ENCODE measurements at regions of chr5 and their contacts with region 1.

Region 1: GRCh38 chr5:43305948-43306565 is 7.2 kb downstream of the HMGCS1 start:
- DNase-seq: no peak
- H3K4me3 Mint-ChIP-seq: peak overlapping the region; percentile 99
- H3K27ac Mint-ChIP-seq: peak overlapping the region; percentile 60
- H3K4me1 Mint-ChIP-seq: peaks cover 58% of the 10 kb centered on the region
- H3K27me3 Mint-ChIP-seq: no peaks in the 10 kb centered on the region
- CTCF ChIP-seq: peak; percentile 44

Region 2: GRCh38 chr5:42994246-42995151 is 311.6 kb before region 1 on chr5:
- CTCF ChIA-PET with region 1: no interaction called
- intact Hi-C with region 1: loop called (anchors 10 kb)
- DNase-seq: peak; percentile 70
- H3K4me3 Mint-ChIP-seq: peak overlapping the region; percentile 95
- H3K27ac Mint-ChIP-seq: peak overlapping the region; percentile 99
- H3K4me1 Mint-ChIP-seq: peaks cover 31% of the 10 kb centered on the region
- H3K27me3 Mint-ChIP-seq: no peaks in the 10 kb centered on the region
- CTCF ChIP-seq: peak; percentile 30

Region 3: GRCh38 chr5:43120720-43121564 is 185.1 kb before region 1 on chr5 and contains the start of gene ZNF131:
- CTCF ChIA-PET with region 1: no interaction called
- intact Hi-C with region 1: loop called (anchors 5 kb)
- DNase-seq: peak; percentile 97
- H3K4me3 Mint-ChIP-seq: peak within 1 kb of the TSS; percentile 92
- H3K27ac Mint-ChIP-seq: peak within 1 kb of the TSS; percentile 96
- H3K4me1 Mint-ChIP-seq: peaks cover 19% of the 10 kb centered on the region
- H3K27me3 Mint-ChIP-seq: no peaks in the 10 kb centered on the region
- CTCF ChIP-seq: no peak
- total RNA-seq, gene ZNF131: 37.0 and 40.9 TPM in 2 replicates

Region 4: GRCh38 chr5:43227655-43228054 is 78.4 kb before region 1 on chr5:
- CTCF ChIA-PET with region 1: interaction called, 3 read pairs
- intact Hi-C with region 1: loop called (anchors 1 kb)
- DNase-seq: no peak
- H3K4me3 Mint-ChIP-seq: no peak overlapping the region
- H3K27ac Mint-ChIP-seq: no peak overlapping the region
- H3K4me1 Mint-ChIP-seq: no peaks in the 10 kb centered on the region
- H3K27me3 Mint-ChIP-seq: no peaks in the 10 kb centered on the region
- CTCF ChIP-seq: peak; percentile 37

Region 5: GRCh38 chr5:43294226-43294625 is 11.8 kb before region 1 on chr5:
- CTCF ChIA-PET with region 1: no interaction called
- intact Hi-C with region 1: loop called (anchors 2 kb)
- DNase-seq: no peak
- H3K4me3 Mint-ChIP-seq: no peak overlapping the region
- H3K27ac Mint-ChIP-seq: no peak overlapping the region
- H3K4me1 Mint-ChIP-seq: peaks cover 28% of the 10 kb centered on the region
- H3K27me3 Mint-ChIP-seq: no peaks in the 10 kb centered on the region
- CTCF ChIP-seq: no peak

Region 6: DNA sequence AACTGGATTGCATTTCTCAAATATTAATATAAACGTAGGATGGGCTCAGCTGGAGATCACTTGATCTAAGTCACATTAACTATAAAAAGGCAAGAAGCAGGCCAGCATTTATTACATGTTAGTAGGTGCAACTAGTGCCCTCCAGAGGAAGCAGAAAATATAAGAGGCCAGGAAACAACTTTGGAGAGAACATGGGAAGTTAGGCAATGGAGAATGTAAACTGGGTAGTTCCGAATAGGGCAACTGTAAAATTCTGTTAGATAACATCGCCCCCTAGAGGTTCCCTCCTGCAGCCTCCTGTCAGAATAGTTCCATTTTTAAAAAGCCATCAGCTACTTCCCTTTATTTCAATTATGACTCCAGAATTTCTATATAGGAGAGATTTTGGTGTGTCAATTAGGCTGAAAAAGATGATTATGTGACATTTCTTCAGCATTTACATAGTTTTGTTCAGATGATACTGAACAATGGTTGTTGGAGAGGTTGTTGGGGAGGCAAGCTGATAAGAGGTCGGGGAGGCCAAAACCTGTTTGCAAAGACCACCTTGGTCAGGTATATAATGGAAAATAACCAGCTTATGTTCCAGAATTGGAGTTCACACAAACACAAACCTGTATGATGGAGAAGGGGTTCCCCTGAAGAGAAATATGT is 83.7 kb after region 1 on chr5:
- CTCF ChIA-PET with region 1: interaction called, 3 read pairs
- intact Hi-C with region 1: loop called (anchors 1 kb)
- DNase-seq: peak; percentile 75
- H3K4me3 Mint-ChIP-seq: no peak overlapping the region
- H3K27ac Mint-ChIP-seq: no peak overlapping the region
- H3K4me1 Mint-ChIP-seq: no peaks in the 10 kb centered on the region
- H3K27me3 Mint-ChIP-seq: no peaks in the 10 kb centered on the region
- CTCF ChIP-seq: peak; percentile 80

Region 7: DNA sequence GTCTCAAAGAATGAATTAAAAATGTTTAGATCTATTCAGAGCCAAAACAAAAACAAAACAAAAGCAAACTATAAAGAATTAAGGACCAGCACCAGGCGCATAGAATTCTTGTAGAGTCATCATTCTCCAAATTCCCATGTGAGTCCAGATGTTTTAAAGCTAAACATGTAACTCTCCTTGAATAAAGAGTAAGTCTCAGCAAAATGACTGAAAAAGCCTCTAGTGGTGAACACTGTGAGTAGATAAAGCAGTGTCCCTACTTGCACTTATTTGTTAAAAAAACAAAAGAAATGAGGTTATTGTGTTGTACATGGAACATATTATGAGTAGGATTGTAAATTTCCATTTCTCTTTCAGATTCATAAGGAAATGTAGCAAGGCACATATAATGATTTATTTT is 340.9 kb after region 1 on chr5:
- CTCF ChIA-PET with region 1: no interaction called
- intact Hi-C with region 1: no loop called
- DNase-seq: no peak
- H3K4me3 Mint-ChIP-seq: no peak overlapping the region
- H3K27ac Mint-ChIP-seq: no peak overlapping the region
- H3K4me1 Mint-ChIP-seq: no peaks in the 10 kb centered on the region
- H3K27me3 Mint-ChIP-seq: no peaks in the 10 kb centered on the region
- CTCF ChIP-seq: no peak

Measured in Calu3 (cell line).